ENCODE measurements at regions of chr16 and their contacts with region 1.

Region 1: GRCh38 chr16:234468-235305 is at the start of gene FAM234A:
- DNase-seq: peak; percentile 97
- H3K4me3 ChIP-seq: peak within 1 kb of the TSS; percentile 77
- H3K27ac ChIP-seq: peak within 1 kb of the TSS; percentile 82
- H3K4me1 ChIP-seq: peaks cover 18% of the 10 kb centered on the region
- CTCF ChIP-seq: peak; percentile 79
- total RNA-seq, gene FAM234A: 8.1 and 10.9 TPM in 2 replicates

Region 2: DNA sequence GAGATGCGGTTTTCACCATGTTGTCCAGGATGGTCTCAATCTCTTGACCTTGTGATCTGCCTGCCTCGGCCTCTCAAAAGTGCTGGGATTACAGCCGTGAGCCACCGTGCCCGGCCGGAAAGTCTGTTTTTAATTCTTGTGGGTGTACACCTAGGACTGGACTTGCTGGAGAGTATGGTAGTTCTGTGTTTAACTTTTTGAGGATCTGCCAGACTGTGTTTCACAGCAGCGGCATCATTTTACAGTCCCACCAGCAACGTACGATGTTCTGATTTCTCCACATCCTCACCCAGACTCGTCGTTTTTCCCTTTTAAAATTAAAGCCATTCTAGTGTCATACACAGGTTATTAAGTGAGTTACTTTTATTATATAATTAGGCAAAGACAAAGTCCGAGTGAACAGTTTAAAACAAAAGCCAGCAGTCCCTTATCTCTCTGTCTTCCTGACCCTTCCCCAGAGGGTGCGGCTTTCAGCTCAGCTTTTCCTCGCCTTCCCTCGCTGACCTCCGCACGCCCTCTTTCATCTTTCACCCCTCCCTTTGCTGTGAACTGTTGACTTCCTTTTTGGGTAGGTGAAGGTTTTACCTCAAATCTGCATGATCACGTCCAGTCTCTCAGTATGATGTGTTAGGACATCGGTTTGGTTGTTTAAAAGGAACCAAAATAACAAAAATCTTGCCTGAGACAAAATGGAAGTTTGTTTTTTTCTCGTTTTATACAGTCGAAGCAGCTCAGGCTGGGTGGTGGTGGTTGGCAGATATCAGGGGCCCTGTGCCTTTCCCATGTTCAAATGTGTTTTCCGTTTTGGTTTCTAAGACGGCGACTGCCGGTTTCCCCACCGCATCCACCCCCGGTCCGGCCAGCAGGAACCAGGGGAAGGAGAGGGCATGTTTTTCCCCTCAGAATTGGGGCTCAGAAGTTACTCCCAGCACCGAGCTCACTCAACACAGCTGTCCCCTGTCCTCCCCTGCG is 18.0 kb after region 1 on chr16:
- CTCF ChIA-PET with region 1: no interaction called
- POLR2A ChIA-PET with region 1: no interaction called
- intact Hi-C with region 1: no loop called
- DNase-seq: no peak
- H3K4me3 ChIP-seq: no peak overlapping the region
- H3K27ac ChIP-seq: no peak overlapping the region
- H3K4me1 ChIP-seq: no peaks in the 10 kb centered on the region
- CTCF ChIP-seq: no peak

Region 3: DNA sequence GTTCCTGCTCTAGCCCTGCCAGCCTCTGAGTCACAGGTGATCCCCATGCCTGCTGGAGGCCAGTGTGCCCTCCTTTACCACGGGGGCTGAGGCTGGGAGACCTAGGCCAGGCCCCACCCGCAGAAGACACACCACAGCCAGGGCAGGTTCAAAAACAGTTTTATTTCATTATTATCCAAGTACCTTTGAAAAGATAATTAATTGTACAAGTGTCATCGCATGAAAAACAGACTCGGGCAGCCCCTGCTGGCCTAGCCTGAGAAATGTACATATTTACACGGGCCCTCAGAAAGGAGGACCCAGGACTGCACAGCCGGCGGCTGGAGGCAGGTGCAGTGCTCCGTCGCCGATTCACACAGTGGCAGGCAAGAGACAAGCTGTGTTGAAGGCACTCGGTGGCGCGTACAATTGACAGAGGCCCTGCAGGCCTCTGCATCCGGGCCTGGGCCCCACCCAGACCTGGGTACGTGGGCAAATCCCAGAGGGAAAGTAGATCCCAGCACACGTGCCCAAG is 52.7 kb after region 1 on chr16:
- CTCF ChIA-PET with region 1: no interaction called
- POLR2A ChIA-PET with region 1: no interaction called
- intact Hi-C with region 1: no loop called
- DNase-seq: peak; percentile 20
- H3K4me3 ChIP-seq: no peak overlapping the region
- H3K27ac ChIP-seq: no peak overlapping the region
- H3K4me1 ChIP-seq: no peaks in the 10 kb centered on the region
- CTCF ChIP-seq: peak; percentile 56; the same call in 1 of the 2 replicates

Region 4: DNA sequence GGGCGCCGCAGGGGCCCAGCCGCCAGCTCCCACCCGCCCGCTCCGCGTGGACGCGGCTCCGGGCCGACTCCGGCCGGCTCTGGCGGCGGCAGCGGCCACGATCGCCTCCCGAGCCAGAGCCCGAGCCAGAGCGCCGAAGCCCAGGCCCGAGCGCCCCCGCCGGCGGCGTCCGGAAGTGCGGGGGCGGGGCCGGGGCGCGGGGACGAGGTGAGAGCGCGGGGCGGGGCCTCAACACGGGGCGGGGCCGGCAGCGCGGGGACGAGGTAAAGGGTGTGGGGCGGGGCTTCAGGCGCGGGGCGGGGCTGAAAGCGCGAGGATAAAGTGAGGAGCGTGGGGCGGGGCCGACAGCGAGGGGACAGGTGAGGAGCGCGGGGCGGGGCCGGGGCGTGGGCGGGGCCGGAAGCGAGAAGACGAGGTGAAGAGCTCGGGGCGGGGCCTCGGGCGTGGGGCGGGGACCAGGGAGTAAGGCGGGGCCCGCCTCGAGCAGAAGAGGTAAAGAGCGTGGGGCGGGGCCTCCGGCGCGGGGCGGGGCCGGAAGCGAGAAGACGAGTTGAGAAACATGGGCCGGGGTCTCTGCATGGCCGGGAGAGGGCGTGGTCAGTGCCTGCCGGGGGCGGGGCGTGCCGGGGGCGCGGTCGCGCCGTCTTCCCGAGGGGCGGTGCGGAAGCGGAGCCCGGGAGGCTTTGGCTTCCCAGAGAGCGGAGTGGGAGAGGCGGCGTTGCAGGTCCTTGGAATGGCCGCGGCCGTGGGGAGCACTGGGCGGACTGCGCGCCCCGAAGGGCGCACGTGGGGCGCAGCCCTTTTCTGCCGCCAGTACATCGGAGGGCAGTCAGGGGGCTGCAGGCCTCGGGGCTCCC is 118.1 kb after region 1 on chr16 and contains the start of gene AXIN1:
- CTCF ChIA-PET with region 1: interaction called, 6 read pairs
- POLR2A ChIA-PET with region 1: interaction called, 3 read pairs
- intact Hi-C with region 1: loop called (anchors 2 kb)
- DNase-seq: peak; percentile 98
- H3K4me3 ChIP-seq: peak within 1 kb of the TSS; percentile 96
- H3K27ac ChIP-seq: no peak within 1 kb of the TSS
- H3K4me1 ChIP-seq: peaks cover 22% of the 10 kb centered on the region
- CTCF ChIP-seq: no peak; the same call in 1 of the 2 replicates
- total RNA-seq, gene AXIN1: 30.3 and 30.6 TPM in 2 replicates